Heart right ventricle (tissue), 16 donors: ENCODE measurements at regions of chr21 and their contacts with region 1.

Region 1: DNA sequence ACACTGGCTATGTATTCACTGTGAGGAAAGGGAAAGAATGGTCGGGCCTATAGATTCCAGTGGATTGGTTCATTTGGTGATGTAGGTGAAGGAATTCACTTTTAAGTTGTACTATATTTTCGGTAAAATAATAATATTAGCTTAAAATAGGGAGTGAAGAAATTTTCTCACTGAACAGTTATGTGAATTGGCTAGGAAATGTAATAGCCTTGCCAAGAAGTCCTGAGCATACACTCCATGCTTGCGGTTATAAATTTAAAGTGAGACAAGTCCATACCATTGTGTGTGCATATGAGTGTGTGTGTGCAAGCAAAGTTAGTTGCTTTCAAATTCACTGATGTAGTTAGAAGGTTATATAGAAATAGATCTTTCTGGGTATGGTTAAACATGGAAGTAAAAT is 1651.0 kb downstream of the NCAM2 start:
- DNase-seq: no peak
- ATAC-seq: no peak
- H3K4me3 ChIP-seq: no peak overlapping the region
- H3K27ac ChIP-seq: no peak overlapping the region
- H3K4me1 ChIP-seq: no peaks in the 10 kb centered on the region
- H3K27me3 ChIP-seq: no peaks in the 10 kb centered on the region
- CTCF ChIP-seq: no peak

Region 2: GRCh38 chr21:22597660-22598255 is 51.5 kb before region 1 on chr21:
- intact Hi-C with region 1: no loop called
- DNase-seq: no peak
- ATAC-seq: no peak
- H3K4me3 ChIP-seq: no peak overlapping the region
- H3K27ac ChIP-seq: no peak overlapping the region
- H3K4me1 ChIP-seq: no peaks in the 10 kb centered on the region
- H3K27me3 ChIP-seq: no peaks in the 10 kb centered on the region
- CTCF ChIP-seq: no peak

Region 3: GRCh38 chr21:22691658-22692057 is 42.4 kb after region 1 on chr21:
- intact Hi-C with region 1: loop called in 1 of 10 experiments (anchors 5 kb)
- DNase-seq: no peak
- ATAC-seq: peak in 1 of 8 donors; percentile 51
- H3K4me3 ChIP-seq: no peak overlapping the region
- H3K27ac ChIP-seq: peak overlapping the region in 1 of 10 donors; percentile 56
- H3K4me1 ChIP-seq: no peaks in the 10 kb centered on the region
- H3K27me3 ChIP-seq: no peaks in the 10 kb centered on the region
- CTCF ChIP-seq: no peak